A549 (cell line): ENCODE measurements at regions of chr10 and their contacts with region 1.

Region 1: DNA sequence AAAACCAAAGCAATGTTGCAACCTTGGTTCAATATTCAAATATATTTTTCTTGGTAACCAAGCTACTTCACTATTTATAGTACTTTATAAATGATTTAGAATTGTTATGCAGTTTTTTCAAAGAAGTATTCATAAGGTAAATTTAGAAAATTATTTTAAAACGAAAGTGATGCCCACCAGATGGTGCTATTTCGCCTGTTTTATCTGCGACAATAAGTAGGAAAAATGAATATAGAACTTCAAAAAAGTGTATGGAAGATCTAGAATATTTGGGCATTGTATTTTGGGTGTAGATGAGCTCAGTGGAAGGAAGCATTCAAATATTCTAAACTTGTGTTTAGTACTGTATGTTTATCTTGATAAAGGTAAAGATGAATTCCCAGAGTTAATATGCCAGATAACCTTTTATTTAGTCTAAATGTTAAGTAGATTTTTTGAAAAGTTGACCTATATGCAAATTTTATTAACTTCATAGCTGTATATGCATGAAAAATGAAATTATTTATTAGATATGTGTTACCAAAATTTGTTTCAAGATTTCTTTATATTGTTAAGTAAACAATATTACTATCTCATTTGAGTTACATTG is 93.2 kb downstream of the ADK start:
- DNase-seq: peak in 1 of 2 experiments; percentile 61
- ATAC-seq: no peak
- H3K4me3 ChIP-seq: no peak overlapping the region
- H3K27ac ChIP-seq: no peak overlapping the region
- H3K4me1 ChIP-seq: no peaks in the 10 kb centered on the region
- CTCF ChIP-seq: peak; percentile 85
- EP300 ChIP-seq: no peak
- POLR2A ChIP-seq: no peak
- RAD21 ChIP-seq: peak; percentile 67 to 78

Region 2: GRCh38 chr10:75019370-75019769 is 775.2 kb after region 1 on chr10:
- CTCF ChIA-PET with region 1: interaction called, 21 read pairs
- POLR2A ChIA-PET with region 1: no interaction called
- DNase-seq: peak in 1 of 2 experiments; percentile 35
- ATAC-seq: peak; percentile 55 to 67; a peak in 3 of 6 replicates
- H3K4me3 ChIP-seq: no peak overlapping the region
- H3K27ac ChIP-seq: no peak overlapping the region
- H3K4me1 ChIP-seq: peaks cover 6% of the 10 kb centered on the region; the same call in 1 of the 3 replicates
- CTCF ChIP-seq: peak; percentile 71
- EP300 ChIP-seq: no peak
- POLR2A ChIP-seq: no peak
- RAD21 ChIP-seq: peak; percentile 70 to 78